Activated T-helper 1 cell treated with anti-CD3 and anti-CD28 coated beads, Interleukin-12 subunit alpha, Interleukin-12 subunit beta, Interleukin-2, Interleukin-4 antibody, amounts not matched to agents 30 ng/mL and 10 ng/mL and 1 ng/mL, durations not matched to agents 14 hours and 24 hours and 36 hours (primary cell): ENCODE measurements at regions of chr14 and their contacts with region 1.

Region 1: DNA sequence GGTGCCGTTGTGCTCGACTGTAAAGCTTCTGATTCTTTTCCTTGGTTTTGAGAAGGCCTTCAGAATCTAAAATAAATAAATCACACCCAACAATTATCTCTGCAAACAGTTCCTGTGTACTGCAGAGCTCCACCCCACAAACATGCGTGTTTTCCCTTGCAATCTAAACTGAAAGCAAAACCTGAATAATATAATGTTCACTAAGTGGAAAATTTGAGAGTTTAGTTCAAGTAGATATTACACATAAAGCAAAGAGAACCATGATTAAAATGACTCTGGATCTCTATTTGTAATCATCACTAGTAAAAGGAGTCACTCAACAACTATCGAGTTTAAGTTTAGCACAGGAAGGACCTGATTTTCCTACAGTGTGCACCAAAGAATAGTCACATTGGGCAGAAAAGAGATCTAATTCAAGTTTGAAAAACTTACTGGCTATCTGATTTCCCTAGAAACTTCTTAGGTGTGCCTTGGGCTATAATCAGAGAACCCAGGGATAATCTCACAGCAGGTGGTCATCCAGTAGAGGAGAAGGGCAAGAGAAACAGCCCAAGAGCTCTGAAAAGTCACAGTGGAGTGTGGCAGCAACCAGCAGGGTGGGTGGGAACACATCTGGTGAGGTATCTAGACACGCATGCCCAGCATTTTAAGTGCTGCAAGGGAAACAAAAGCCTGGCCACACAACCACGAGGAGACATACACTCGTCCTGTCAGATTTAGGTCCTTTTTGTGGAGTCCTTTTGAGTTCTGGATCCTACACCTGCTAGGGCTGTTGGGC is 25.4 kb downstream of the ATG14 start:
- DNase-seq: peak; percentile 5
- H3K4me3 Mint-ChIP-seq: peak overlapping the region; percentile 69
- H3K27ac Mint-ChIP-seq: peak overlapping the region; percentile 96
- H3K4me1 Mint-ChIP-seq: peaks cover 52% of the 10 kb centered on the region
- H3K27me3 Mint-ChIP-seq: no peaks in the 10 kb centered on the region

Region 2: GRCh38 chr14:55339770-55340169 is 46.5 kb before region 1 on chr14:
- intact Hi-C with region 1: loop called (anchors 2 kb)
- DNase-seq: no peak
- H3K4me3 Mint-ChIP-seq: peak overlapping the region; percentile 48
- H3K27ac Mint-ChIP-seq: peak overlapping the region; percentile 16
- H3K4me1 Mint-ChIP-seq: peaks cover 85% of the 10 kb centered on the region
- H3K27me3 Mint-ChIP-seq: no peaks in the 10 kb centered on the region

Region 3: DNA sequence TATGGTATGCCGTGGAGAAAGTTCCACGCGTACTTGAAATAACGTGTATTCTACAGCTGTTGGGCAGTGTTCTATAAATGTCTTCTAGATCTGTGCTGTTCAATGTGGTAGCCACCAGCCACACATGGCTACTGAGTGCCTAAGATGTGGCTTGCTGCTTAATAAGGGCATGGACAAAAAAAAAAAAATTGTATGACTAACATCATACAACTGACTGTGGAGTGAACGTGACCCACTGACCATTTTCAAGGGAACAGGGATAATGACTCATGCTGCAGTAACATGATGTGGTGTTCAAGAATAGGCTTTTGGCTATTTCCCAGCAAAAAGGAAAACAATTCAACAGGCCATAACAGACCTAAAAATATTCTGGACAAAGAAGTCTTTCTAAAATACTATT is 12.5 kb after region 1 on chr14:
- intact Hi-C with region 1: loop called (anchors 1 kb)
- DNase-seq: no peak
- H3K4me3 Mint-ChIP-seq: no peak overlapping the region
- H3K27ac Mint-ChIP-seq: no peak overlapping the region
- H3K4me1 Mint-ChIP-seq: peaks cover 12% of the 10 kb centered on the region
- H3K27me3 Mint-ChIP-seq: no peaks in the 10 kb centered on the region

Region 4: GRCh38 chr14:55411426-55412389 is 25.5 kb after region 1 on chr14 and contains the start of gene ATG14:
- intact Hi-C with region 1: loop called (anchors 1 kb)
- DNase-seq: peak; percentile 70
- H3K4me3 Mint-ChIP-seq: peak within 1 kb of the TSS; percentile 89
- H3K27ac Mint-ChIP-seq: peak within 1 kb of the TSS; percentile 85
- H3K4me1 Mint-ChIP-seq: peaks cover 29% of the 10 kb centered on the region
- H3K27me3 Mint-ChIP-seq: no peaks in the 10 kb centered on the region
- total RNA-seq, gene ATG14: 4.8 and 6.2 TPM in 2 replicates